Esophagus squamous epithelium (tissue), 5 donors: ENCODE measurements at regions of chr17 and their contacts with region 1.

Region 1: DNA sequence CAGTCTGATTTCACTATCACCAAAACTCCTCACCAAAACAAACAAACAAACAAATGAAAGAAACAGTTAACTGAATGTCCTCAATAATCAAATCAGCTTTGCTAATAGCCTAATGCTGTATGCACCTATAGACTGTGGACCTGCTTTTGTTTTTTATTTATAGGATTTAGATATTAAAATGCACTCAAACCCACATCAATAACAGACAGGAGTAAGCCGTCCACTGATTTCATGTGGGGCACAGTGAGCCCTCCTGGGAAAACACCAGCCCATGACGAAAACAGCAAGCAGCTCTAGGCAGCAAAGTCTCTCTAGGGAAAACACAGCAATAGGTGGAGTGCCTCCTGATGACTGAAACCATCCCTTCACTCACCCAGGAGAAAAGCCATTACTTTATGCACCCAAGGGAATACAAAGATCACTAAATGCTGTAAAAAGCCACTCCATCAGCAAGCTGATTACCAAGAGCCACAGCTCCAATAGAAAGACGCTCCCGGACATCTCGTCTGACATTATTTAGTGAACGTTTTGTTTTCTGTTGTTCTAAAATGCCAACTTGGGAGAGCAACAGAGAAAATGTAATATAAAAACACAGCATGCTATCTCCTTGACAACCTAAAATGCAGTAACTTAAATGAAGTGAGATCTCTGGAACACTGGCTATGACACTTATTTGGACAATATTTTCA is 47.8 kb downstream of the ANKFY1 start:
- DNase-seq: no peak
- H3K4me3 ChIP-seq: no peak overlapping the region
- H3K27ac ChIP-seq: peak overlapping the region in 1 of 4 donors; percentile 38
- H3K4me1 ChIP-seq: peaks cover 0 to 33% (median 12%) of the 10 kb centered on the region in 3 donors
- H3K27me3 ChIP-seq: no peaks in the 10 kb centered on the region
- CTCF ChIP-seq: no peak
- POLR2A ChIP-seq: no peak

Region 2: GRCh38 chr17:4304417-4305027 is 88.5 kb after region 1 on chr17:
- intact Hi-C with region 1: loop called (anchors 10 kb)
- DNase-seq: no peak
- H3K4me3 ChIP-seq: no peak overlapping the region
- H3K27ac ChIP-seq: no peak overlapping the region
- H3K4me1 ChIP-seq: peaks cover 0 to 28% (median 7%) of the 10 kb centered on the region in 3 donors
- H3K27me3 ChIP-seq: no peaks in the 10 kb centered on the region
- CTCF ChIP-seq: peak; percentile 37 to 70 (median 52)
- POLR2A ChIP-seq: no peak

Region 3: DNA sequence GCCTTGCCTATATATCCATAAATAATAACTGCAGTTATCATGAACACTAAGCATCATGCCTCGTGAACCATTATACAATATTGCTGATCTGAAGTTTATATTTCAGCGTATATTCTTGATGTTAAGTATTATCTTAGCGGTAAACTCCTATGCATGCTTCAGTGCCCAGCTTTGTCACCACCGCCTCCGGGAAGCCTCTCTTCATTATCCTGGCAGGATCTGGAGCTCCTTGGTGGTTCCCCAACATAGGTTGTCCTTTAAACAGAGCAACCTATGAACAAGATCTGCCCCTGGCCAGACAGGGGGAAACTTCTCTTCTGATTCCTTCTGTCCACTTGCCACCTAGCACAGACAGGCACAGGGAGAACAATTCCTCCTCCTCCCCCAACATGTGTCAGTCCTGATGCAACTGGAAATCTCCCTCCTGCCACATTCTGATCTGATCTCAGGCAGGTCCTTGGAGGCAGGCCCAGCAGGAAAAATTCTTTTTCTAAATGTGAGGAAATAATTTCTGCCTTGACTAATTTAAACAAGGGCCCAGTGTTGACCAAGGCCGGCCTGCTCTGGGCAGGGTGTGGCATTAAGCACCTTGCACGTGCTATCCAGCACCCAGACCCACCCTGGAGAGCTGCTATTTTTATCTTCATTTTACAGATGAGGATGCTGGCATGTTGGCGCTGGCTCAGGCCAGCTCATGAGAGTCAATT is 305.0 kb after region 1 on chr17:
- intact Hi-C with region 1: no loop called
- DNase-seq: no peak
- H3K4me3 ChIP-seq: no peak overlapping the region
- H3K27ac ChIP-seq: peak overlapping the region; percentile 66 to 93 (median 82)
- H3K4me1 ChIP-seq: peaks cover 20 to 77% (median 39%) of the 10 kb centered on the region in 3 donors
- H3K27me3 ChIP-seq: no peaks in the 10 kb centered on the region
- CTCF ChIP-seq: no peak
- POLR2A ChIP-seq: no peak